Caco-2 (cell line): ENCODE measurements at regions of chr12 and their contacts with region 1.

Region 1: DNA sequence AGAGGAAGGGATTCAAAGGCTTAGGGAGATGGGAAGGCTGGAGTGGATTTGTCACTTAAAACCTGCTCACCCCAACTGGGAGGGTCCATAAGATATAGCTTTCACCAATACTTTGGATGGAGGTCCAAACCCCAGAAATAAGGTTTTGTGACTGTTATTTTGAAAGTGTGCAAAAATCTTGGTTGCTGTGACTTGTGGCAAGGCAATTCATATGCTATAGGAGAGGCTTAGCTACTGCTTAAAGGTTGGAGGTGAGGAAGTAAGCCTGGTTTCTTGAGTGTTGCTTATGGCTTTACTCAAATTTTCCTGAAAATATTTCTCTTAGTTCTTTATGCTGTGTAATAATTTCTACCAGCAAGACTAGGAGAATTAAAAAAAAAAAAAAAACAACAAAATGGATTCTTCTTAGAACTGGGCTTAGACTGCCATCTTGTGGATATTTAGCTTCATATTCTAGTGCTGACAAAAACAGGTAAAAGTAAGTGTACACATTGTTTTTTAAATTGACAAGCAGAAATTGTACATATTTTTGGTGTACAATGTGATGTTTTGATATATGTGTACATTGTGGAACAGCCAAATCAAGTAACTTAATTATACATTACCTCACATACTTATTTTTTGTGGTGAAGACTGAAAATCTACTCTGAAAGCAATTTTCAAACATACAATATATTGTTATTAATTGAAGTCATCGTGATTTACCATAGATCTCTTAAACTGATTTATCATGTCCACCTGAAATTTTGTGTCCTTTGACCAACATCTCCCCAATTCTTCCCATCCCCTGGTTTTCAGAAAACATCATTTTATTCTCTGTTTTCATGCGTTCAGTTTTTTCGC is 23.0 kb downstream of the PDE6H start:
- DNase-seq: peak in 1 of 2 experiments; percentile 46
- H3K4me3 ChIP-seq: no peak overlapping the region
- H3K4me3 Mint-ChIP-seq: no peak overlapping the region
- H3K27ac Mint-ChIP-seq: no peak overlapping the region
- H3K4me1 ChIP-seq: 0 out of 2 replicates have a peak, but pooled peaks cover 4% of the 10 kb centered on the region
- H3K4me1 Mint-ChIP-seq: peaks cover 7% of the 10 kb centered on the region
- H3K27me3 ChIP-seq: no peaks in the 10 kb centered on the region
- H3K27me3 Mint-ChIP-seq: peaks cover 14% of the 10 kb centered on the region
- CTCF ChIP-seq: peak; percentile 69 to 74

Region 2: DNA sequence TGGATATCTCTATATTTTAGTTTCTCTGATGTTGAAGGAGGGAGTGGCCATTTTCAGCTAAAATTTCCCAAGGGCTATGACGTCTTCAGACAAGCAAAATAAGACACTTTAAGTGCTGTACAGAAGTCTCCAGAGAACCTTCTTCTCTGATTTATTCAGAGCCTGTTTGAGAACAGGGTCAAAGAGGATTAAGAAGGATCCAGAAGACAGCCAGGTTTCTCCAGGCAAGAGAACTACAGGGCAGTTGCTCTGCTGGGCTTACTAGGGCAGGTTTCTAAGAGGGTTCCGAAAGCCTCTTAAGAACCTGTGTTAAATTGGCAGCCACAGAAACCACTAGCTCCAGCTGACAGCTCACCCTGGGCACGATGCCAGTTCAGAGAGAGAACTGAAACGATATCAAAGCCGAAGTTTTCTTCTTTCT is 111.3 kb before region 1 on chr12:
- CTCF ChIA-PET with region 1: no interaction called
- POLR2A ChIA-PET with region 1: no interaction called
- intact Hi-C with region 1: no loop called
- DNase-seq: no peak
- H3K4me3 ChIP-seq: no peak overlapping the region
- H3K4me3 Mint-ChIP-seq: no peak overlapping the region
- H3K27ac Mint-ChIP-seq: no peak overlapping the region
- H3K4me1 ChIP-seq: no peaks in the 10 kb centered on the region
- H3K4me1 Mint-ChIP-seq: no peaks in the 10 kb centered on the region
- H3K27me3 ChIP-seq: no peaks in the 10 kb centered on the region
- H3K27me3 Mint-ChIP-seq: peaks cover 19% of the 10 kb centered on the region
- CTCF ChIP-seq: no peak

Region 3: DNA sequence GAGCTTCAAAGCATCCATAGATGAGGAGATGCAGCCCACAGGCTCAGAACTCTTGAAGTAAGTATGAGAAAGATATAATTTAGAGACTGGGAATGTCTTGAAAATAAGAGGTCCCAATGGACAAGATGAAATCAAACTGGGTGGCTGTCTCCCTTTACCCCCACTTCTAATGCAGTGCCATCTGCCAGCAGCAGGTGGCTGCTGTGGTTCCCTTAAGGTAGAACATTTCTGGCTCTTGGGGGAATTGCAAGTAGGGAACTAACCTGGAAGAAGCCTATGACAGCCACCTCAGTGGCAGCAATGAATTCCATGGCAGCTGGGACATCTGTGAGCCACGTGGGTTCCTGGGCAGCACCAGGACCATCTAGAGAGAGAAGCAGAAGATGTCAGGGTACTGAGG is 58.1 kb before region 1 on chr12:
- CTCF ChIA-PET with region 1: interaction called, 4 read pairs
- POLR2A ChIA-PET with region 1: no interaction called
- intact Hi-C with region 1: loop called (anchors 1 kb)
- DNase-seq: peak in 1 of 2 experiments; percentile 41
- H3K4me3 ChIP-seq: no peak overlapping the region
- H3K4me3 Mint-ChIP-seq: no peak overlapping the region
- H3K27ac Mint-ChIP-seq: no peak overlapping the region
- H3K4me1 ChIP-seq: peaks cover 21% of the 10 kb centered on the region
- H3K4me1 Mint-ChIP-seq: peaks cover 23% of the 10 kb centered on the region
- H3K27me3 ChIP-seq: no peaks in the 10 kb centered on the region
- H3K27me3 Mint-ChIP-seq: no peaks in the 10 kb centered on the region
- CTCF ChIP-seq: peak; percentile 34 to 51